GM12878 (cell line): ENCODE measurements at regions of chr16 and their contacts with region 1.

Region 1: GRCh38 chr16:68719993-68720489 is 17.1 kb upstream of the CDH1 start:
- DNase-seq: peak; percentile 89
- ATAC-seq: peak; percentile 95
- H3K4me3 ChIP-seq: no peak overlapping the region
- H3K27ac ChIP-seq: peak overlapping the region; percentile 56
- H3K4me1 ChIP-seq: peaks cover 16% of the 10 kb centered on the region
- H3K27me3 ChIP-seq: no peaks in the 10 kb centered on the region
- CTCF ChIP-seq: no peak
- EP300 ChIP-seq: peak; percentile 71 to 77; a peak in 3 of 4 replicates
- POLR2A ChIP-seq: no peak
- RAD21 ChIP-seq: no peak

Region 2: DNA sequence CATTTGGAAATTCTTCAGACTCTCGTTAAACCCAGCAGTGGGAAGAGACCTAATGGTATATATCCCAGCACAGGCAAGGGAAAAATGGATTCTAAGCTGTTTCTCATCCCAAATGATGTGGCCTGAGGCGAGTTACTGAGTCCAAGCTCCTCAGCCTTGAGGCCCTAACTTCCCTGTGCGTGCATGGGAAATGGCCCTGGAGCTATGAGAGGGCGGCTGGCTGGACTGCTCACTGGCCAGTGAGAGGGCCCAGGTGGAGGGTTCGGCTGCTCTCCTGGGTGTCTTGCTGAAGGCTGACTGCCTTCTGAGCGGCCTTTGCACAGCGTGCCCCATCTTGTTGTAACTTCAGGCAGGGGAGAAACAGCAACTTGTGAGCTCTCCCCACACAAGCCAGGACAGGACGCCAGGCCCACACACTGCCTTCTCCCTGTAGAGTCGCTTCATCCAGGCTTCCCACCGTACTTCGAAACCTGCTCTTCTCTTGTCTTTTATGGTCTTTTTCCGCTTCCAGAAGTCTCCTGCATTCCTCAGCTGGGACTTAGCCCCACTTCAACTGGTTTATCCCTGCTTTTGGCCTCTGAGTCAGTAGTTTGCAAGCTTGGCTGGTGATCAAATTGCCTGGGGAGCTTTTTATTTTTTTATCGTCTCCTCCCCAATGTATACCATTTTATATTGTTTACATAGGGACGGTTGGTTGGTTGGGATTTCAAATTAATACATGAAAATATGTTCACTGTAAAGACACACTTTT is 61.6 kb before region 1 on chr16:
- CTCF ChIA-PET with region 1: no interaction called
- POLR2A ChIA-PET with region 1: no interaction called
- RAD21 ChIA-PET with region 1: no interaction called
- SMC1A ChIA-PET with region 1: no interaction called
- in situ Hi-C with region 1: no loop called
- intact Hi-C with region 1: no loop called
- DNase-seq: no peak
- ATAC-seq: no peak
- H3K4me3 ChIP-seq: no peak overlapping the region
- H3K27ac ChIP-seq: no peak overlapping the region
- H3K4me1 ChIP-seq: no peaks in the 10 kb centered on the region
- H3K27me3 ChIP-seq: no peaks in the 10 kb centered on the region; a peak in 1 of 4 replicates
- CTCF ChIP-seq: no peak
- EP300 ChIP-seq: no peak
- POLR2A ChIP-seq: no peak
- RAD21 ChIP-seq: no peak

Region 3: GRCh38 chr16:68737730-68738629 is 17.9 kb after region 1 on chr16:
- CTCF ChIA-PET with region 1: no interaction called
- POLR2A ChIA-PET with region 1: interaction called, 3 read pairs
- RAD21 ChIA-PET with region 1: interaction called, 6 read pairs
- SMC1A ChIA-PET with region 1: interaction called, 24 read pairs
- in situ Hi-C with region 1: no loop called
- intact Hi-C with region 1: no loop called
- DNase-seq: no peak
- ATAC-seq: no peak
- H3K4me3 ChIP-seq: no peak overlapping the region
- H3K27ac ChIP-seq: no peak overlapping the region
- H3K4me1 ChIP-seq: peaks cover 21% of the 10 kb centered on the region
- H3K27me3 ChIP-seq: no peaks in the 10 kb centered on the region; a peak in 1 of 4 replicates
- CTCF ChIP-seq: no peak
- EP300 ChIP-seq: no peak
- POLR2A ChIP-seq: no peak
- RAD21 ChIP-seq: no peak

Region 4: GRCh38 chr16:68752602-68753001 is 32.6 kb after region 1 on chr16:
- CTCF ChIA-PET with region 1: interaction called, 10 read pairs
- POLR2A ChIA-PET with region 1: interaction called, 18 read pairs
- RAD21 ChIA-PET with region 1: interaction called, 39 read pairs
- SMC1A ChIA-PET with region 1: interaction called, 29 read pairs
- in situ Hi-C with region 1: no loop called
- intact Hi-C with region 1: loop called (anchors 1 kb)
- DNase-seq: no peak
- ATAC-seq: peak; percentile 53
- H3K4me3 ChIP-seq: no peak overlapping the region
- H3K27ac ChIP-seq: no peak overlapping the region
- H3K4me1 ChIP-seq: peaks cover 30% of the 10 kb centered on the region
- H3K27me3 ChIP-seq: no peaks in the 10 kb centered on the region
- CTCF ChIP-seq: no peak
- EP300 ChIP-seq: peak; percentile 20 to 24; a peak in 2 of 4 replicates
- POLR2A ChIP-seq: no peak
- RAD21 ChIP-seq: no peak

Region 5: DNA sequence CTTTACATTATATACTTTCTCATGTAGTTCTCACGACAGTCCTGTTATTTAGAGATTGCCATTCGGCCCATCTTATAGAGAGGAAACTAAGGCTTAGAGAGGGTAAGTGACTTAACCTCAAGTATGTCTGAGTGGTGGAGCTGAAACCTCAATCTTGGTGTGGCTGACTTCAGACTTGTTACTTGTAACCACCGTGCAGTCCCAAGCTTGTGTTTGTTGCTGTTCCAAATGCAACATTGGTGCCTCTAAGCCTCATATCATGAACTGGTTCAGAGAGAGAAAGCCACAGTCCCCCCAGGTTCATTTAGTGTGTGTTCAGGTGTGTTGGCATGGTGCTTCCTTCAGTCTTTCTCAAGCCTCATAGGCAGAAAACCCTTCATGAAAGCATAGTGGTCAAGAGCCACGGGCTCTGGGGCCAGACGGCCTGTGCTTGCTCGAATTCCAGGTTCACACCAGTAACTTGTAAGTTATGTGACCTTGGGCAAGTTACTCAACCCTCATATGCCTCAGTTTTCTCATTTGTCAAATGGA is 56.8 kb after region 1 on chr16:
- CTCF ChIA-PET with region 1: interaction called, 3 read pairs
- POLR2A ChIA-PET with region 1: no interaction called
- RAD21 ChIA-PET with region 1: interaction called, 5 read pairs
- SMC1A ChIA-PET with region 1: interaction called, 3 read pairs
- in situ Hi-C with region 1: no loop called
- intact Hi-C with region 1: loop called (anchors 1 kb)
- DNase-seq: peak; percentile 92
- ATAC-seq: peak; percentile 90
- H3K4me3 ChIP-seq: no peak overlapping the region
- H3K27ac ChIP-seq: peak overlapping the region; percentile 69
- H3K4me1 ChIP-seq: peaks cover 38% of the 10 kb centered on the region
- H3K27me3 ChIP-seq: no peaks in the 10 kb centered on the region
- CTCF ChIP-seq: no peak
- EP300 ChIP-seq: peak in 1 of 2 experiments; percentile 81; a peak in 3 of 4 replicates
- POLR2A ChIP-seq: no peak
- RAD21 ChIP-seq: no peak

Region 6: GRCh38 chr16:68782198-68782597 is 62.2 kb after region 1 on chr16:
- CTCF ChIA-PET with region 1: interaction called, 3 read pairs
- POLR2A ChIA-PET with region 1: no interaction called
- RAD21 ChIA-PET with region 1: interaction called, 5 read pairs
- SMC1A ChIA-PET with region 1: interaction called, 3 read pairs
- in situ Hi-C with region 1: no loop called
- intact Hi-C with region 1: loop called (anchors 1 kb)
- DNase-seq: no peak
- ATAC-seq: peak; percentile 80
- H3K4me3 ChIP-seq: peak overlapping the region; percentile 26
- H3K27ac ChIP-seq: peak overlapping the region; percentile 84
- H3K4me1 ChIP-seq: peaks cover 36% of the 10 kb centered on the region
- H3K27me3 ChIP-seq: no peaks in the 10 kb centered on the region
- CTCF ChIP-seq: no peak
- EP300 ChIP-seq: no peak
- POLR2A ChIP-seq: no peak
- RAD21 ChIP-seq: no peak

Region 7: GRCh38 chr16:68800257-68800875 is 80.3 kb after region 1 on chr16:
- CTCF ChIA-PET with region 1: interaction called, 6 read pairs
- POLR2A ChIA-PET with region 1: no interaction called
- RAD21 ChIA-PET with region 1: interaction called, 4 read pairs
- SMC1A ChIA-PET with region 1: interaction called, 16 read pairs
- in situ Hi-C with region 1: no loop called
- intact Hi-C with region 1: no loop called
- DNase-seq: peak; percentile 66
- ATAC-seq: peak; percentile 99
- H3K4me3 ChIP-seq: no peak overlapping the region
- H3K27ac ChIP-seq: 0 out of 2 replicates have a peak overlapping the region, but pooled peaks have one; percentile 13
- H3K4me1 ChIP-seq: no peaks in the 10 kb centered on the region
- H3K27me3 ChIP-seq: no peaks in the 10 kb centered on the region
- CTCF ChIP-seq: peak; percentile 84 to 93 (median 85)
- EP300 ChIP-seq: no peak
- POLR2A ChIP-seq: no peak
- RAD21 ChIP-seq: peak; percentile 100